GM12878 (cell line): ENCODE measurements at regions of chr15 and their contacts with region 1.

Region 1: GRCh38 chr15:64893481-64894394 is 18.0 kb upstream of the ANKDD1A start:
- DNase-seq: peak; percentile 99
- ATAC-seq: peak; percentile 81
- H3K4me3 ChIP-seq: peak overlapping the region; percentile 78
- H3K27ac ChIP-seq: peak overlapping the region; percentile 97
- H3K4me1 ChIP-seq: peaks cover 42% of the 10 kb centered on the region
- H3K27me3 ChIP-seq: no peaks in the 10 kb centered on the region
- CTCF ChIP-seq: no peak
- EP300 ChIP-seq: peak in 1 of 2 experiments; percentile 72; a peak in 2 of 4 replicates
- POLR2A ChIP-seq: peak; percentile 86
- RAD21 ChIP-seq: no peak; the same call in 1 of the 2 replicates

Region 2: DNA sequence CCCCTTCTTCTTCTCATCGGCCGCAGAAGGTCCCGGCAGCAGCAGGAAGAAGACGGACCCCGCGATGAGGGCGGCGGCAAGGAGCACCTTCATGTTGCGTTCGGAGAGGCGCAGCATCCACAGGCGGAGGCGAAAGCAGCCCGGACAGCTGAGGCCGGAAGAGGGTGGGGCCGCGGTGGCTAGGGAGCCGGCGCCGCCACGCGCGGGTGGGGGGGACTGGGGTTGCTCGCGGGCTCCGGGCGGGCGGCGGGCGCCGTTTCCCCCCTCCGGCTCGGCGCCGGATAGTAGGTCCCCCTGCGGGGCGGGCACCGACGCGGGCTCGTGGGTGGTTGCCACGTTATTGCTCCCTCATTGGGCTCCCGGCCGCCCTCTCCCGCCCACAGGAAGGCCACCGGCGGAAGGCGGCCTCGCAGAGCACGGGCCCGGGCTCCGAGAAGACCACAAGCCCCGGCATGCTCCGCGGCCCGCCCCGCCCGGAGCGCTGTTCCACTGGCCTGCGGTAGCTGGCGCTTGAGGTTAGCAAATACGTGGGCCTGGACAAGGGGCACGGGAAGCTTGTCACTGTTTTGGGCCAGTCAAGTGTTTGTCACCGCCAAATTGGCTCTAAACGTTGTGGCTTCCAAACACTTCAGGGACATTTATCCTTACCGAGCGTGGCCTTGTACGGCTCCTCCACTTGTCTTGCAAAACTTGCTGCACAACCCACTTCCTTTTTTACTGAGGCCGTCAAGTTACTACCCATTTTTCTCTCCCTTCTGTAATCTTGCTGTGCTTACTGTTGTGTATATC is 730.7 kb before region 1 on chr15 and contains the start of gene PPIB:
- CTCF ChIA-PET with region 1: no interaction called
- POLR2A ChIA-PET with region 1: no interaction called
- RAD21 ChIA-PET with region 1: no interaction called
- SMC1A ChIA-PET with region 1: interaction called, 3 read pairs
- in situ Hi-C with region 1: no loop called
- intact Hi-C with region 1: loop called (anchors 2 kb)
- DNase-seq: peak; percentile 91
- ATAC-seq: peak; percentile 95
- H3K4me3 ChIP-seq: peak within 1 kb of the TSS; percentile 84
- H3K27ac ChIP-seq: peak within 1 kb of the TSS; percentile 81
- H3K4me1 ChIP-seq: peaks cover 30% of the 10 kb centered on the region
- H3K27me3 ChIP-seq: no peaks in the 10 kb centered on the region
- CTCF ChIP-seq: peak; percentile 47 to 73 (median 54)
- EP300 ChIP-seq: no peak
- POLR2A ChIP-seq: peak; percentile 99
- RAD21 ChIP-seq: peak; percentile 67
- polyA plus RNA-seq, gene PPIB: 831 to 858 TPM

Region 3: GRCh38 chr15:64749999-64750657 is 143.6 kb before region 1 on chr15:
- CTCF ChIA-PET with region 1: interaction called, 4 read pairs
- POLR2A ChIA-PET with region 1: interaction called, 5 read pairs
- RAD21 ChIA-PET with region 1: interaction called, 23 read pairs
- SMC1A ChIA-PET with region 1: interaction called, 11 read pairs
- in situ Hi-C with region 1: no loop called
- intact Hi-C with region 1: no loop called
- DNase-seq: no peak
- ATAC-seq: no peak
- H3K4me3 ChIP-seq: no peak overlapping the region
- H3K27ac ChIP-seq: no peak overlapping the region
- H3K4me1 ChIP-seq: peaks cover 17% of the 10 kb centered on the region
- H3K27me3 ChIP-seq: no peaks in the 10 kb centered on the region; a peak in 1 of 4 replicates
- CTCF ChIP-seq: no peak
- EP300 ChIP-seq: no peak
- POLR2A ChIP-seq: no peak
- RAD21 ChIP-seq: no peak

Region 4: DNA sequence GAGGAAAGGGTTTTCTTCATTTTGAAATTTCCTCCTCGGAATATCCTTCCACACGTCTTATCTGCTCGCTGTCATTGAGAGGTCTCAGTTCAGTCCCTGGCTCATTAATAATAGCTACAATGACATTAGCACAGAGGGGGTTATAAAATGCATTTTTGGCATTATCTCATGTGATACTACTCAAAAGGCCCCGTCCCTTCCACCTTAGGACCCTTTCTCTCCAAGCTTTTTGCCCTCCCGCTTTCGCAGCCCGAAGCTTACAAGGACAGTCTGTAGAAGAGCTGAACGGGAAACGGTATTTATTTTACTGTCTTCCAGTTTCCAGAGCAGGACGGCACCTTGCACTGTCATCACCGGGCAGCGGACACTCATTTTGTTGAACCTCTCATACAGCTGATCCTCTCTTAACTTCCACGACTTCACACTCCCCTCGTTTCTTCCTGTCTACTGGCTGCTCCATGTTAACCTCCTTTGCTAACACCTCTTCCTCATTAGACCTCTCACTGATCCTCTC is 57.7 kb before region 1 on chr15:
- CTCF ChIA-PET with region 1: interaction called, 45 read pairs
- POLR2A ChIA-PET with region 1: interaction called, 32 read pairs
- RAD21 ChIA-PET with region 1: interaction called, 50 read pairs
- SMC1A ChIA-PET with region 1: interaction called, 34 read pairs
- in situ Hi-C with region 1: no loop called
- intact Hi-C with region 1: no loop called
- DNase-seq: no peak
- ATAC-seq: peak; percentile 9
- H3K4me3 ChIP-seq: no peak overlapping the region
- H3K27ac ChIP-seq: no peak overlapping the region
- H3K4me1 ChIP-seq: 0 out of 2 replicates have a peak, but pooled peaks cover 10% of the 10 kb centered on the region
- H3K27me3 ChIP-seq: no peaks in the 10 kb centered on the region
- CTCF ChIP-seq: no peak
- EP300 ChIP-seq: no peak
- POLR2A ChIP-seq: no peak
- RAD21 ChIP-seq: no peak

Region 5: DNA sequence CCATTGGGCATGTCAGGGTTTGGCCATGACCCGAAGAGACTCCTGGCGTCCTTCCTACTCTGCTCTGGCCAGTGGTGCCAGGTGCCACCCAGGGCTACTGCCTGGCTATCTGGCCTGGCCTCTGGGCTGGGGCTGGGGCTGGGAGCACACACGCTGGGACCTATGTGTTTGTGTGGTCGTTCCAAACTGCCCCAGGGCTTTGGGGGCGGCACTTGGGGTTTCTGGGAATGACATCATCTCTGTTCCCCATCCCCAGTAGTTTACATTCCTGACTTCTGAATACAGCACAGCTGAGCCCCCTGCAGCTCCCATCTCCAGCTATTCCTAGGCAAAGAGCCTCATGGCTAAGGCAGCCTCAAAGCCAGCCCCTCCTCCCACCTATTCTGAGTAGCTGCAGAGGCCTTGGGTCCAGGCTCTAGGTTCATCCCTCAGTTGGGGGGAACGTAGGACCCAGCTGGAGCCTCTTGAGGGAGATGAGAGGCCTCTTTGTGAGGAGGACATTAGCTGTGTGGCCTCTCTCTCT is 27.7 kb before region 1 on chr15:
- CTCF ChIA-PET with region 1: interaction called, 8 read pairs
- POLR2A ChIA-PET with region 1: interaction called, 14 read pairs
- RAD21 ChIA-PET with region 1: interaction called, 33 read pairs
- SMC1A ChIA-PET with region 1: interaction called, 51 read pairs
- in situ Hi-C with region 1: no loop called
- intact Hi-C with region 1: no loop called
- DNase-seq: no peak
- ATAC-seq: no peak; the same call in 2 of the 3 replicates
- H3K4me3 ChIP-seq: no peak overlapping the region
- H3K27ac ChIP-seq: no peak overlapping the region
- H3K4me1 ChIP-seq: peaks cover 6% of the 10 kb centered on the region
- H3K27me3 ChIP-seq: no peaks in the 10 kb centered on the region
- CTCF ChIP-seq: no peak
- EP300 ChIP-seq: no peak
- POLR2A ChIP-seq: no peak
- RAD21 ChIP-seq: no peak

Region 6: DNA sequence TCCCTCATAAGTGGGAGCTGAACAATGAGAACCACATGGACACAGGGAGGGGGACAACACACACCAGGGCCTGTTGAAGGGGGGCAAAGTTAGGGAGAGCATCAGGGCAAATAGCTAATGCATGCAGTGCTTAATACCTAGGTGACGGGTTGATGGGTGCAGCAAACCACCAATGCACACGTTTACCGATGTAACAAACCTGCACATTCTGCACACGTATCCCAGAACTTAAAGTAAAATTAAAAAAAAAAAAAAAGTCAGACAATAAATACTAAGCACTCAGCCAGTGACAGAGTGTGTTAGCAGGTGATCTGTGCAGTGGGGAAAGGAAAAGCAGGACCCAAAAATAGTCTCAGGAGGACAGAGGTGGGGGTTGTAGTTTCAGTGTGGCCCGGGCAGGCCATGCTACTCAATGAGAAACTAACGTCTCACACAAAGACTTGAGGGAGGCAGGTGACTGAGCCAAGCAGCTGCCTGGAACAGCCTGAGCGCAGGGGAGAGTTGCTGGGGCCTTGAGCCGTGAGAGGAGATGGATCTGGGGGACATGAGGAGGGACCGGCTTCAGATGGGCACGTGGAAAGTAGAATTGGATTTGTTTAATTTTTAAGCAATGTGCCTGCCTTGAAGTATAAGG is 36.4 kb after region 1 on chr15:
- CTCF ChIA-PET with region 1: interaction called, 10 read pairs
- POLR2A ChIA-PET with region 1: interaction called, 3 read pairs
- RAD21 ChIA-PET with region 1: interaction called, 3 read pairs
- SMC1A ChIA-PET with region 1: interaction called, 4 read pairs
- in situ Hi-C with region 1: no loop called
- intact Hi-C with region 1: no loop called
- DNase-seq: peak; percentile 65
- ATAC-seq: peak; percentile 89
- H3K4me3 ChIP-seq: peak overlapping the region; percentile 24; the same call in 1 of the 2 replicates
- H3K27ac ChIP-seq: peak overlapping the region; percentile 71
- H3K4me1 ChIP-seq: peaks cover 38% of the 10 kb centered on the region
- H3K27me3 ChIP-seq: no peaks in the 10 kb centered on the region
- CTCF ChIP-seq: no peak
- EP300 ChIP-seq: 0 out of 4 replicates have a peak, but pooled peaks of 1 of the 2 experiments have one; percentile 17
- POLR2A ChIP-seq: 0 out of 2 replicates have a peak, but pooled peaks have one; percentile 27
- RAD21 ChIP-seq: peak; percentile 20; the same call in 1 of the 2 replicates

Region 7: GRCh38 chr15:64975390-64975789 is 81.7 kb after region 1 on chr15:
- CTCF ChIA-PET with region 1: no interaction called
- POLR2A ChIA-PET with region 1: no interaction called
- RAD21 ChIA-PET with region 1: no interaction called
- SMC1A ChIA-PET with region 1: no interaction called
- in situ Hi-C with region 1: no loop called
- intact Hi-C with region 1: no loop called
- DNase-seq: no peak
- ATAC-seq: no peak
- H3K4me3 ChIP-seq: no peak overlapping the region
- H3K27ac ChIP-seq: no peak overlapping the region
- H3K4me1 ChIP-seq: no peaks in the 10 kb centered on the region
- H3K27me3 ChIP-seq: no peaks in the 10 kb centered on the region
- CTCF ChIP-seq: no peak
- EP300 ChIP-seq: no peak
- POLR2A ChIP-seq: no peak
- RAD21 ChIP-seq: no peak

Region 8: GRCh38 chr15:65028921-65029735 is 135.4 kb after region 1 on chr15 and contains the start of gene MTFMT:
- CTCF ChIA-PET with region 1: interaction called, 4 read pairs
- POLR2A ChIA-PET with region 1: interaction called, 4 read pairs
- RAD21 ChIA-PET with region 1: no interaction called
- SMC1A ChIA-PET with region 1: no interaction called
- in situ Hi-C with region 1: no loop called
- intact Hi-C with region 1: loop called (anchors 5 kb)
- DNase-seq: no peak
- ATAC-seq: peak; percentile 96
- H3K4me3 ChIP-seq: peak within 1 kb of the TSS; percentile 95
- H3K27ac ChIP-seq: peak within 1 kb of the TSS; percentile 60
- H3K4me1 ChIP-seq: peaks cover 11% of the 10 kb centered on the region
- H3K27me3 ChIP-seq: no peaks in the 10 kb centered on the region
- CTCF ChIP-seq: no peak
- EP300 ChIP-seq: no peak
- POLR2A ChIP-seq: peak; percentile 94
- RAD21 ChIP-seq: no peak
- polyA plus RNA-seq, gene MTFMT: 1.7 to 3.3 TPM